Left lung (tissue), 14 donors: ENCODE measurements at regions of chr17 and their contacts with region 1.

Region 1: DNA sequence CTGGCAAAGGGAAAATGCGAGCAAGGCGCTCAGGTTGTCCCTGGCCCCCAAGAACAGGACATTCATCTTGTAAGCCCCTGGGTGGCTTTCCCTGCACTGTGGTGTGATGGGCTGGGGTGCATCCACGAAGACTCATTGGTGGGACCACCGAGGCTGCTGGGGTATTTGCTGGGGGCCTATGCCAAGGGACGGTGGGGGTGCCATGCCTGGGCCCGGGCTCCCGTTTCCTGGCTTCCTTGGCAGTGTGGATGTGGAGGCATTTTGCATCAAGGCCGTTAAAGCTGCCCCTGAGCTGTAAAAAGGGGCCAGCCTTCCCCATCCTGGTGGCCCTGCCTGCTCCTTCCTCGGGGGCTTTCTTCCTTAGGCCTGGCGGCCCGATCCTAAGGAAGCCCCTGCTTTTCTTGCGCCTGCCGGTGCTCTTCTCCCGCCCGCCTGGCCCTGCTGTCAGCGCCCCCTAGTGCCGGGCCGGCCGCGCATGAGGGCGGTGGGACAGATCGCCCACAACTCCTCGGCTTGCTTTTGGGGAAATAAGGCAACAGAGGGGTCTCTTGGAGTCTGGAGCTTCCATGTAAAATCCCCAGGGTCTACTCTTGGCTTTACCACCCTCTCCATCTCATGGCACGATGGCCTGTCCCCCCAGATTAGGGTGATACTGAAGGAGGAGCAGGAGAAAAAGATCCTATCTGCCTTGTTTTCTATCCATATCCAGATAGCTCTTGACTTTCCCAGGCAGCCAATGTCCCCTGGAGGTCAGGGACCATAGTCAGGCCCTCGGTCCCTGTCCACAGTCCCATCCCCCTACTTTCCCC is 9.8 kb upstream of the TBX2 start:
- DNase-seq: peak in 2 of 4 donors; percentile 57 to 89
- ATAC-seq: peak; percentile 83
- H3K4me3 ChIP-seq: no peak overlapping the region
- H3K27ac ChIP-seq: peak overlapping the region in 1 of 2 donors; percentile 6
- H3K4me1 ChIP-seq: peaks cover 0 to 9% of the 10 kb centered on the region in 2 donors
- H3K27me3 ChIP-seq: peaks cover 0 to 11% of the 10 kb centered on the region in 2 donors
- CTCF ChIP-seq: peak; percentile 78

Region 2: GRCh38 chr17:60720763-60721531 is 668.9 kb before region 1 on chr17:
- intact Hi-C with region 1: loop called in 1 of 2 experiments (anchors 10 kb)
- DNase-seq: peak in 2 of 4 donors; percentile 69 to 84
- ATAC-seq: peak; percentile 86
- H3K4me3 ChIP-seq: no peak overlapping the region
- H3K27ac ChIP-seq: no peak overlapping the region
- H3K4me1 ChIP-seq: no peaks in the 10 kb centered on the region
- H3K27me3 ChIP-seq: no peaks in the 10 kb centered on the region
- CTCF ChIP-seq: peak; percentile 67 to 80